Posterior cingulate gyrus (tissue), 11 donors: ENCODE measurements at regions of chr3 and their contacts with region 1.

Region 1: DNA sequence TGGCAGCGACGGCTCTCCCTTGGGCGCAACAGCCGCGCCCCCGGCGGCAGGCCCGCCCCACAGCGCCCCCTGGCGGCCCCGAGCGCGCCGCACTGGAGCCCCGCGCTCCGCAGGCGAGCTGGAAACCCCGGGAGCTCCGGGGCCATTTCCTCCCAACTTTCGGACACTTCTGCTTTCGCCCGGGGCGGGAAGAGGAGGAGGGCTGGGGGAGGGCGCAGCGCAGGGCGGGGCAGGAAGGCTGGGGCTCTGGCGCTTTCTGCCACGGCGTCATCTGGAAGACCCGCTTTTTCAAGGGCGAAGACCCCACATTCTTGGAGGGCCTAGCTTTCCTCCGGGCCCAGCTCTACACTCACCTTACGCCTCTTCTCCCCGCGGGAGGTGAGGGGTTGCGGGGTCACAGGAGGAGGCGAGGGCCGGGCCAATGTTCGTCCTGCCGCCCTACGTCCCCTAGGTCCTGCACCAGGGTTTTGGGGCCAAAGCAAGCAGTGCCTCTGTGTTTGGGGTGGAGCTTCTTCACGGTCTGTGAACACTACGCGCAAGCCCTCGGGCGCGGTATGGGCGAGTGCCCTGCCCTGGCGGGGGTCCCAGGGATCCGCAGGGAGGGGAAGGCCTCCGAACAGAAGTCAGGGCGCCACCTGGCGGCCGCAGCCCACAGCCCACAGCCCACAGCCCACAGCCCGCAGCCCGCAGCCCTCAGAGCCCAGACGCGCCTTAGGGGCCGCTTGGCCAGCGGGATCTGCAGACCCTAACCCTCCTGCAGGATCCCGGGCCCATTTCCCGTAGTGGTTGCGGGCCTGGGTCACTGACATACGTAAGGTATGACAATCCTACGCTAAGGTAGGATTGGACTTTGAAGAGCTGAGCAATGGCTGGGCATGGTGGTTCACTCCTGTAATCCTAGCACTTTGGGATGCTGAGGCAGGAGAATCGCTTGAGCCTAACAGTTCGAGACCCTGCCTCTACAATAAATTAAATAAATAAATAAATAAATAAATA is 31.1 kb downstream of the FOXL2 start:
- DNase-seq: peak; percentile 70 to 97 (median 84)

Region 2: DNA sequence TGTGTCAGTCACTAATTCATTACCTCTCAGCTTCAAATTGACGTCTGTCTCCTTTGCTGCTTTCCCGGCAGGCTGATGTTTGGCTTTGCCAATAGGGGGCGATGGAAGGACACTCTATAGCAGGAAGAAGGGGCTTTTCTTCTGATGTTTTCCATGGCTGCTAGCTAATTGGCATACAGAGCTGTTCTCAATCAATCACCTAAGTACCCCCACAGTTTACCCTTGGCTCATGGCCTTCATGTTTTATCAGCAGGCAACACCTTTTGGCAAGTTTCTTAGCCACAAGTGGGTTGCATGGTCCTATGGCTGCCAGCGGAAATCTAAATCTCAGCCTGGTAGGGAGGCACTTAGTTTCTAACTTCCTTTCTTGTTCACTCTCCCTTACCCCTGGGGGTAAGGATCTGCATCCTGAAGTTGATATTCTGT is 436.4 kb before region 1 on chr3:
- intact Hi-C with region 1: loop called (anchors 10 kb)
- DNase-seq: peak in 1 of 10 donors; percentile 19

Region 3: GRCh38 chr3:138594150-138594934 is 321.5 kb before region 1 on chr3 and contains the start of gene CEP70:
- intact Hi-C with region 1: loop called (anchors 1 kb)
- DNase-seq: peak; percentile 80 to 98 (median 91)

Region 4: GRCh38 chr3:138609898-138610266 is 305.9 kb before region 1 on chr3:
- intact Hi-C with region 1: loop called (anchors 5 kb)
- DNase-seq: no peak

Region 5: DNA sequence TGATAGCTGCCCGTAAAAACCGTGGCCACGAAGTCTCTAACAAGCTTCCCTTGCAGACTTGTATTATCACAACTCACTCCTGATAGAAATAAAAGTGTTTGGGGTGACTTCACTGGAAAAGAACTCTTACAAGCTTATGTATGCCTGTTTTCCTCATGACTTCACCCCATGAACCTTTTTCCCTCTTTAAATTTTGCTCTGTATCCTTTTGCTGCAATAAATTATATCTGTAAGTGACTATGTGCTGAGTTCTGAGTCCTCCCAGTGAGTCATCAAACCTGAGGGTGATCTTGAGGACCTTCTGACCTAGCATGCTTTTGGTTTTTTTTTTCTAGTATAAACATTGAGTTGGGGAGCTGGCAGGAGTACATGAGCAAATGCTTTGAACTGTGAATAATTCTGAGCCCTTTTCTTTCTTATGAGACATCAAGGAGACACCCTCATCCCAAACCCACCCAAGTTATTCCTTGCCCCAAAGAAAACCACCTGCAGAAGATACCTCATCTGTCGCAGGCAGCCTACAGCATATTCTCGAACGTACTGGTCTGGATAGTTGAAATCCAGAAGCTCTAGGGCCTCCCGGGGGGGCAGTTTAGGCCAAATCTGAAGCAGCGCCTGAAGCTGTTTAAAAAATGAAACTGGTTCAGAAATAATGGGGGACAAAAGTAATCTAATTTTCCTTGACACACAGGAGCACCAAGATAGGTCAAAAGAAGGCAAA is 221.4 kb before region 1 on chr3:
- intact Hi-C with region 1: loop called (anchors 1 kb)
- DNase-seq: no peak

Region 6: DNA sequence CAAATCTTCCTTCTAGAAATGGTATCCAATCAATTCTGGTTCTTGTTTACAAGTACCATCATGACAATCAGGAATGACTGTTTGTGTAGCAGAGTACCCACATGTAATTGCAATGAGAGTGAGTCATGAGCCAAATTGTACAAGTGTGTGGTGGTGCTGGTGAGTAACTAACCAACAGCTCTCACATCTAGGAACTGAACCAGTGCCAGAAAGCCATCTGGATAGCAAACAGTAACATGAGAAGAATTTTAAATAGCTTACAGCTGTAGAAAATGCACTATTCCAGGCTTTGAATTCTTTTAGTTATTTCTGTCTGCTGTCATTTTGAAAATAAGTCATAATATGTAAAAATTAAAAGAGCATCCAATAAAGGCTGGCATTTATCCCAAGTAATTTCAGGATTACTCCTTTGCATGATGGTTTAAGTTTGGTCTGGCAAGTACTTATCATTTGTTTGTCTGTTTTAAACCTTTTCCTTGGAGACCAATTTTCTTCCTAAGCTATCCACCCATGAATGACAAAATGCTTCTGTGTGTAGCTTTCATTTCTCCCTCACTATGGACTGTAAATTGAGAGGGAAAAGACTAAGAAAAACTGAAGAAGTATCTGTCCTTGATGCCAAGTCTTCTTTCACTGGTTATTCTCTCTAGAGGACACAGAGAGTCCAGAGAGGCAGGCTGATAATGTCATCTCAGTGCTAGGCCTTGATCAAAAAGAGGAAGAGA is 141.1 kb before region 1 on chr3:
- intact Hi-C with region 1: loop called (anchors 5 kb)
- DNase-seq: peak in 6 of 10 donors; percentile 37 to 81 (median 50)

Region 7: DNA sequence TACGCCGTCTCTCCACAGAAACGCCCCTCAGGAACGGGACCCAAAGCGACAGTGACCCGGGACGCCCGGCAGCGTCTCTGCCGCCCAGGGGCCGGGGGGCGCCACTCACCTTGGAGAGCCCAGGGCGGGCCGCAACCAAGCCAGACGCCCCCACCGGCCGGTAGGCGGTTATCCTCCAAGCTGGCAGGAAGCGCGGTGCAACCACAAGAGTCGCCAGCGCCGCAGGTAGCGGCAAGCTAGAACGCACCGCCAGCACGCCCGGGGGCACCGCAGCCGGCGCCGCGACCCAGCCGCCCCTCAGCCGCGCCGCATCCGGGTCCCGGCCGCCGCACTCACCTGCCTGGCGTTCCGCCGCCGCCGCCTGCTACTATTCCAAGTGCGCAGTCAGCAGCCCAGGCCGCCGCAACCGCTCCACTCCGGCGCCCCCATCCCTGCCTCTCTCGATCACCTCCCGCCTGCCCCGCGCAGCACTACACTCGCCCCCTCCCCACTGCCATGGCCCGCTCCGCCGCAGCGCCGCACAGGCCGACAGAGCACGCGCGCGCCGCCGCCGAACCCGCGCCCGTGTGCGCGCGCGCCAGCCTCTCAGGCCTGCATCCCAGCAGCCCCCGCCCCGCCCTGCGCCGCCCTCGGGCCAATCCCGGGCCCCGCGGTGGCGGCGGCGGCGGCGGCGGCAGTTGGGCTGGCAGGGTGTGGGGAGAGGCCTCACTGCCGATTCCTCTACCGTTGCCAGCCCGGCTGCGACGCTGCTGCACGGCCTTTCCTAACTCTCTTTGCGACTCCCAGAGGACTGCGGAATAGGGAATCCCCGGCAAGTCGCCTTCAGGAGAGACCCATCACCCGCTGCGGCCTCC is 81.2 kb before region 1 on chr3 and contains the start of gene PIK3CB:
- intact Hi-C with region 1: loop called (anchors 2 kb)
- DNase-seq: peak; percentile 79 to 98 (median 88)

Region 8: DNA sequence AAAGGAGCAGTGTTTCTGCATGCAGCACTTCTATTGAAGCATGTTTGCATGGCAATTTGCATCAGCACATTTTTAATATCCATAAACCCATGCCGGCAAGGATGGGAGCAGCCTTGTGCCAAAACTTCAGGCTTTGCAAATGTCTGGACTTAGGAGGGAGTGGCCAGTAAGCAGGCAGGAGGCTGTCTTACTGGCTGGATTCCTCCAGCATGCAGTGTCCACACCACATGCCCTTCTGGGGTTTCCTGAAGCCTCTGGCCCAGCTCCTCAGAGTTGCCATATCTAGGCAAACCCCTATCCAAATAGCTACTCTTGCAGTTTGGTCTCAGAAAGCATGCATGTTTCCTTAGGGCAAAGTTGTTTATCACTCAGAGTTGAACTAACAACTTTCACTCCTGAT is 288.9 kb after region 1 on chr3:
- intact Hi-C with region 1: no loop called
- DNase-seq: no peak